Stomach (tissue), 19 donors: ENCODE measurements at regions of chr16 and their contacts with region 1.

Region 1: GRCh38 chr16:15888072-15888976 is at the start of gene CEP20:
- DNase-seq: peak; percentile 100
- H3K4me3 ChIP-seq: peak within 1 kb of the TSS; percentile 65 to 87 (median 76)
- H3K27ac ChIP-seq: peak within 1 kb of the TSS; percentile 84 to 91 (median 86)
- H3K4me1 ChIP-seq: peaks cover 23 to 51% (median 36%) of the 10 kb centered on the region in 4 donors
- H3K27me3 ChIP-seq: no peaks in the 10 kb centered on the region
- CTCF ChIP-seq: peak in 1 of 7 experiments; percentile 42
- EP300 ChIP-seq: no peak
- POLR2A ChIP-seq: peak in 1 of 4 donors; percentile 13
- total RNA-seq, gene CEP20: 7.0 to 40.0 (median 8.2) TPM

Region 2: DNA sequence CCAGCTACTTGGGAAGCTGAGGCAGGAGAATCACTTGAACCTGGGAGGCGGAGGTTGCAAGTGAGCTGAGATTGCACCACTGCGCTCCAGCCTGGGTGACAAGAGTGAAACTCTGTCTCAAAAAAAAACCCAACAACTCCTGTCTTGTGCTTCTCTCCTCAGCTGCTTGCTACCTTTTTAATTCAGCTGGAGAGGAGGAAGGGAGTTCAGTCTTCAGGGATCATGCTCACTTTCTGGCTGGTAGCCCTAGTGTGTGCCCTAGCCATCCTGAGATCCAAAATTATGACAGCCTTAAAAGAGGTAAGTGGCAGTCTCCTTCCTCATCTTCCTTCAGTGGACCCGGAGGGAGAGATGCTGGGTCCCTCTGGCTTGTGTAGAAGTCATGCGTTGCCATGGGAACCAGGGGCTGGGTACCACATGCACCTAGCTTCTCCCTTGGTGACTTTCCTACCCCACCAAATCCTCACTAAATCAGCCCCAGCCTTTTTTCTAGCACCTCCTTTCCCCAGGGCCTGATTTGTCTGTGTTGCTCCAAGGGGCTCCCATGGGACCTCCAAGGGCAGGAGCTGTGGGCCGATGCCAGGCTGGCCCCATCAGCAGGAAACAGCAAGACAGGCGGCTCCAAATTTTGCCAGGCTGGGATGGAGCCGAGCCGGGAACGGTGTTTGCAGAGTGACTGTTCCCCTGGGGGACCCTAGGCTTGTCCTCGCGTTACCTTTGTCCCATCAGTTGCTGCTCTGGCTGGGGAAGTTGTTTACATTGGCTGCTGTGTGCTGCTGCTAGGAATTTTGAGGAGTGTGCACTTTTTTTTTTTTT is 126.2 kb after region 1 on chr16:
- intact Hi-C with region 1: loop called (anchors 10 kb)
- DNase-seq: peak; percentile 53 to 81
- H3K4me3 ChIP-seq: no peak overlapping the region
- H3K27ac ChIP-seq: peak overlapping the region; percentile 37 to 79 (median 66)
- H3K4me1 ChIP-seq: peaks cover 21 to 52% (median 26%) of the 10 kb centered on the region in 4 donors
- H3K27me3 ChIP-seq: no peaks in the 10 kb centered on the region
- CTCF ChIP-seq: no peak
- EP300 ChIP-seq: no peak
- POLR2A ChIP-seq: no peak